H1 (cell line): ENCODE measurements at regions of chr1 and their contacts with region 1.

Region 1: GRCh38 chr1:32063261-32063681 is 9.5 kb upstream of the TMEM39B start:
- DNase-seq: no peak
- H3K4me3 ChIP-seq: no peak overlapping the region
- H3K27ac ChIP-seq: no peak overlapping the region
- H3K4me1 ChIP-seq: peaks cover 3 to 21% (median 11%) of the 10 kb centered on the region in 4 experiments
- H3K27me3 ChIP-seq: no peaks in the 10 kb centered on the region
- CTCF ChIP-seq: peak in 2 of 3 experiments; percentile 24 to 48; a peak in 2 of 4 replicates
- EP300 ChIP-seq: no peak
- POLR2A ChIP-seq: no peak; a peak in 1 of 3 replicates
- RAD21 ChIP-seq: peak; percentile 51 to 66

Region 2: GRCh38 chr1:32040711-32041110 is 22.6 kb before region 1 on chr1:
- CTCF ChIA-PET with region 1: interaction called, 10 read pairs
- POLR2A ChIA-PET with region 1: interaction called, 15 read pairs
- DNase-seq: no peak
- H3K4me3 ChIP-seq: no peak overlapping the region
- H3K27ac ChIP-seq: no peak overlapping the region
- H3K4me1 ChIP-seq: no peaks in the 10 kb centered on the region
- H3K27me3 ChIP-seq: no peaks in the 10 kb centered on the region
- CTCF ChIP-seq: no peak
- EP300 ChIP-seq: no peak
- POLR2A ChIP-seq: no peak
- RAD21 ChIP-seq: no peak

Region 3: GRCh38 chr1:32052887-32053286 is 10.4 kb before region 1 on chr1:
- CTCF ChIA-PET with region 1: interaction called, 12 read pairs
- POLR2A ChIA-PET with region 1: interaction called, 15 read pairs
- DNase-seq: no peak
- H3K4me3 ChIP-seq: no peak overlapping the region
- H3K27ac ChIP-seq: no peak overlapping the region
- H3K4me1 ChIP-seq: no peaks in the 10 kb centered on the region
- H3K27me3 ChIP-seq: no peaks in the 10 kb centered on the region
- CTCF ChIP-seq: no peak
- EP300 ChIP-seq: no peak
- POLR2A ChIP-seq: no peak
- RAD21 ChIP-seq: no peak